Aorta (tissue), 5 donors: ENCODE measurements at regions of chr11 and their contacts with region 1.

Region 1: DNA sequence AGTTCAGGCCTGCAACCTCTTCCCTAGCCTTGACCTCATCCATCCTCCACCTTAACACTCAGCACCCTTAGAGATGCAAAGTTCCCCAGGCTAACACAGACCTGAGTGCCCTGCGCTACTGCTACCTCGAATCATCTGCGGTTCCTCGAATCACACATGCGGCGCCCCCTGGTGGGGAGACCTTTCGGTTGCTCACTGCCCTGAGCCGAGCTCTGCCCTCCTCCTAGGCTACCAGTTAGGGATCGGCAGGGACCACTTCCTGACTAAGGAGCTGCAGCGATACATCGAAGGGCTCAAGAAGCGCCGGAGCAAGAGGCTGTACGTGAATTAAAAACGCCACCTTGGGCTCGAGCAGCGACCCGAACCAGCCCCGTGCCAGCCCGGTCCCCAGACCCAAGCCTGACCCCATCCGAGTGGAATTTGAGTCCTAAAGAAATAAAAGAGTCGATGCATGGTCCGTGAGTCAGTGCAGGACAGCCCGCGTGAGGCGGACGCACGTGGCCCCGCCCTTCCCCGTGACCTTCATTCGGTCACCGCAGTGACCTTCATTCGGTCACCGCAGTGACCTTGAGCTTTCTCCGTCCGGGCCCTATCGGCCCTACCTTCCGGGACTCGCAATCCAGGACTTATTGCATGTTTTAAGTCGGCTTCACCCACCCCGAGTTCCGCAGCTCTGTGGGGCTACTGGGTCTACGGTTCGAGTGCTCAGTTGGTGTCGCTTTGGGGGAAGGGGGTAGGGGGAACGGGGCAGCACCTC is 830 bp upstream of the ESRRA start:
- DNase-seq: peak; percentile 95 to 98
- ATAC-seq: peak; percentile 73
- H3K4me3 ChIP-seq: peak overlapping the region; percentile 7 to 12
- H3K27ac ChIP-seq: peak overlapping the region in 1 of 2 donors; percentile 1
- H3K4me1 ChIP-seq: no peaks in the 10 kb centered on the region
- H3K27me3 ChIP-seq: no peaks in the 10 kb centered on the region

Region 2: GRCh38 chr11:64185816-64186498 is 118.5 kb before region 1 on chr11 and contains the start of gene STIP1:
- intact Hi-C with region 1: loop called in 1 of 2 experiments (anchors 5 kb)
- DNase-seq: peak; percentile 99
- ATAC-seq: peak; percentile 96
- H3K4me3 ChIP-seq: peak within 1 kb of the TSS; percentile 22 to 52
- H3K27ac ChIP-seq: peak within 1 kb of the TSS; percentile 47 to 80
- H3K4me1 ChIP-seq: no peaks in the 10 kb centered on the region
- H3K27me3 ChIP-seq: no peaks in the 10 kb centered on the region
- total RNA-seq, gene STIP1: 67.9 to 111 TPM

Region 3: GRCh38 chr11:64204464-64204989 is 100.0 kb before region 1 on chr11:
- intact Hi-C with region 1: loop called (anchors 2 to 5 kb)
- DNase-seq: peak; percentile 92 to 94
- ATAC-seq: peak; percentile 74
- H3K4me3 ChIP-seq: no peak overlapping the region
- H3K27ac ChIP-seq: no peak overlapping the region
- H3K4me1 ChIP-seq: no peaks in the 10 kb centered on the region
- H3K27me3 ChIP-seq: no peaks in the 10 kb centered on the region

Region 4: DNA sequence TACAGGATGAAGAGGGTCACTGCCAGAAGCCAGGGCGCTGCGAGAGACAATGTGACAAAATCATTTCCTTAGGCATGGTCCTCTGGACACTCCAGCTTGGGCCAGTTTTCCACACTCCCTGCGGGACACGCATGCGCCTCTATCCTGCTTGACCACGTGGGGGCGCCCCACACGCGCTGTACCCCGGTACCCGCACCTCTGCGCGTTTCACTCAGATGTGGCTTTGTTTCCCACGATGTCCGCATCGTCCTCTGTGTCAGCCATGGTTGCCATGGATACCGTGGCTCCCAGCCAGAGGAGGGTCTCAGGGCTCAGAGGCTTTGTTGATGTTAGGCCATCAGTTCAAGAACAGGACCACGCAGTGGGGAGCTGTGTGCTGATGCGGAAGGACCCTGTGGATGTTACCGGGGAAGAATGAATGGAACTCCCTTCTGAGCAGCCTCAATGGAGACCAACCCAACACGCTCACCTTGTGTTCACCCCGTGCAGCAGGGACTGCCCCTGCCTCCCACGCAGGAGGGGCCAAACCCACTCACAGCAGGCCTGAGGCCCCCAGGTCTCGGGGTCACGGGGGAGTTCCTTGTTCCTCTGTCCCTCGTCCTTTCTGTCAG is 185.4 kb after region 1 on chr11:
- intact Hi-C with region 1: no loop called
- DNase-seq: peak; percentile 73 to 88
- ATAC-seq: peak; percentile 87
- H3K4me3 ChIP-seq: no peak overlapping the region
- H3K27ac ChIP-seq: no peak overlapping the region
- H3K4me1 ChIP-seq: no peaks in the 10 kb centered on the region
- H3K27me3 ChIP-seq: no peaks in the 10 kb centered on the region